ENCODE measurements at regions of chr12 and their contacts with region 1.

Region 1: DNA sequence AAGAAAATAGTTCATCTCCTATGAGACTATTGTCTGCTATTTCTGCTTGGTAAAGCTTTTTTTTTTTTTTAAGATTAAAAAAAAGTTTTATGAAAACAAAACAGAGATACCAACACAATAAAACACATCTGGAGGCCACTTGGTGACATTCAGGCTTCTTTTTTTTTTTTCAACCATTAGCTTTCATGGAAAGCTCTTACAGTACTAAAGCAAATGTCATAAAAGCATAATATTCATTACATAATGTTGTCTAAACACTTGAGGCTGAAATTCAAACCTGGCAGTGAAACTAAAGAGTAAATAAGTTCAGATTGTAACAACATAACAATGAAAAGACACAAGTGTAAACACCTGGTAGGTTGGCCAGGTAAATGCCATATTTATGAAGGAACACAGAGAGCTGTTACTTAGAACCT is 14.7 kb downstream of the PRICKLE1 start:
- DNase-seq: no peak
- ATAC-seq: no peak
- H3K4me3 ChIP-seq: no peak overlapping the region
- H3K4me3 Mint-ChIP-seq: no peak overlapping the region
- H3K27ac ChIP-seq: no peak overlapping the region
- H3K27ac Mint-ChIP-seq: no peak overlapping the region
- H3K4me1 ChIP-seq: no peaks in the 10 kb centered on the region
- H3K4me1 Mint-ChIP-seq: no peaks in the 10 kb centered on the region
- H3K27me3 ChIP-seq: no peaks in the 10 kb centered on the region
- H3K27me3 Mint-ChIP-seq: peaks cover 5 to 11% (median 9%) of the 10 kb centered on the region in 5 donors

Region 2: DNA sequence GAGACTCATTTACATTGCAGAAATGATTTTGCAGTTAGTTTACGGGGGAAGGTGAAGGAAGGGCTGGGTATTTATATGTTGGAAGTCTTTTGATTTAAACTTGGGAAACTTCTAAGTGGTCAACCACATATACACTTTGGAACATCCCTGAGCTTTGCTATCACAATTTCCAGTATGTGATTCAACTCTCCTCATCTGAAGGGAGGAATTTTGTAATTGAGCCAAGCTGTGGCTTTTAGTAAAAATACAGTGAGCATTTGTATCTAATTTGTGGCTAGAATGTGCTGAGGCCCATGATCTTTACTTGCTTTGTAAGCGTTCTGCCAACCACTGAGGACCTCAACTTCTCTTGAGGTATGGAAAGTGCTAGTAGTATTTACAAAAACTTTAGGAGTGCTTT is 1621.8 kb before region 1 on chr12:
- CTCF ChIA-PET with region 1: no interaction called
- POLR2A ChIA-PET with region 1: no interaction called
- intact Hi-C with region 1: loop called in 1 of 2 experiments (anchors 10 kb)
- DNase-seq: no peak
- ATAC-seq: no peak
- H3K4me3 ChIP-seq: no peak overlapping the region
- H3K4me3 Mint-ChIP-seq: no peak overlapping the region
- H3K27ac ChIP-seq: no peak overlapping the region
- H3K27ac Mint-ChIP-seq: no peak overlapping the region
- H3K4me1 ChIP-seq: no peaks in the 10 kb centered on the region
- H3K4me1 Mint-ChIP-seq: no peaks in the 10 kb centered on the region
- H3K27me3 ChIP-seq: no peaks in the 10 kb centered on the region
- H3K27me3 Mint-ChIP-seq: peaks cover 0 to 18% (median 9%) of the 10 kb centered on the region in 5 donors

Region 3: DNA sequence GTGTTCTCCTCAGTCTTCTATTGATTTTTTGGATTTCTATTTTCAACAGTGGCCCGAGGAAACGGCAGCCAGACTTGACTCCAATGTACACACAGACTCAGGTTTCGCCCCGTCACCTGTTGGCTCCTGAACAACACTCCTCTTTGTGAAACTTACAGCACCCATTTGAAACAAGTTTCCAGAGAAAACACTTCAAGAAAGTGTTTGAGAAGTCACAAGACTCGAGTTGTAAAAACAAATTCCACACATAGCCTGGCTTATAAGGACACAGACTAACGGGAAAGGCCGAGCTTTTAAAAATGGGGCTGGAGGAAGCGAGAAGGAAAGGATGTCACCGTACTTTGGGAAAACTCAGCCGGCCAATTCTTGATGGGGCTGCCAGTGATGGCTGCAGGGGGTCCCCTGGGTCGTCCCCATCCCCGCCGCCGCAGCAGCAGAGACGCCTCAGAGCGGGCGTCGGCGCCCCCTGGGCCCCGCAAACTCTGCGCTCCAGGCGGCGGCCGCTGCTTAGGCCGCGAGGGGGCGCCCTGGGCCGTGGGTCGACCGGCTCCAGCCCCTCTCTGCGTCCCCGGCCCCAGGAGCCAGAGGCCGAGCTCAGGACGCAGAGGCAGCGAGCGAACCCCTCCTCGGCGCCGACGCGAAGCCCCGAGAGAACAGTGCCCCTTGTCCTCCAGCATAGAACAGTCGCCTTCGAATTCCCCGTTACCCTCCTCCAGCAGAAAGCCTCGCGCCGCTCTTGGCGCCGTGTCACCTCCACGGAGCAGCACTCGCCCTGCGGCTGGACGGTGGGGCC is 92.2 kb before region 1 on chr12:
- CTCF ChIA-PET with region 1: no interaction called
- POLR2A ChIA-PET with region 1: no interaction called
- intact Hi-C with region 1: no loop called
- DNase-seq: peak in 7 of 9 donors; percentile 10 to 74 (median 32)
- ATAC-seq: peak; percentile 80
- H3K4me3 ChIP-seq: peak overlapping the region; percentile 58
- H3K4me3 Mint-ChIP-seq: peak overlapping the region; percentile 67 to 90 (median 80)
- H3K27ac ChIP-seq: no peak overlapping the region
- H3K27ac Mint-ChIP-seq: no peak overlapping the region
- H3K4me1 ChIP-seq: peaks cover 0 to 5% of the 10 kb centered on the region in 2 donors
- H3K4me1 Mint-ChIP-seq: peaks cover 4 to 16% (median 10%) of the 10 kb centered on the region in 7 donors
- H3K27me3 ChIP-seq: peaks cover 0 to 24% of the 10 kb centered on the region in 2 donors
- H3K27me3 Mint-ChIP-seq: peaks cover 69 to 89% (median 82%) of the 10 kb centered on the region in 5 donors

Region 4: DNA sequence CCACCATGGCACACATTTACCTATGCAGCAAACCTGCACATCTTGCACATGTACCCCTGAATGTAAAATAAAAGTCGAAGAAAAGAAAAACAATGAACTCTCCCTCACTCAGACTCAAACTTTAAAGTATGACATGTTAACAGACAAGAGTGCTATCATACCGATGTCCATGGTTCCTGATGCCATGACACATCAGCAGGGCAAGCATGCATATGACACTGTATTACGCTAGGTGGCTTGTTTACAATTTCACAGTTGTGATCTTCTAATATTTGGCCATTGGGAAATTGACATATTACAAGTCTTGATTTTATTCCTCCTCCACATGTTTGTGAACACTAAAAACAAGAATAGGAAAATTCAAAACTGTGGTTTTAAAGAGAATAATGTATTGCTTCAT is 850.5 kb after region 1 on chr12:
- CTCF ChIA-PET with region 1: no interaction called
- POLR2A ChIA-PET with region 1: no interaction called
- intact Hi-C with region 1: no loop called
- DNase-seq: no peak
- ATAC-seq: no peak
- H3K4me3 ChIP-seq: no peak overlapping the region
- H3K4me3 Mint-ChIP-seq: no peak overlapping the region
- H3K27ac ChIP-seq: no peak overlapping the region
- H3K27ac Mint-ChIP-seq: no peak overlapping the region
- H3K4me1 ChIP-seq: no peaks in the 10 kb centered on the region
- H3K4me1 Mint-ChIP-seq: no peaks in the 10 kb centered on the region
- H3K27me3 ChIP-seq: no peaks in the 10 kb centered on the region
- H3K27me3 Mint-ChIP-seq: no peaks in the 10 kb centered on the region